OCI-LY7 (cell line): ENCODE measurements at regions of chr13 and their contacts with region 1.

Region 1: DNA sequence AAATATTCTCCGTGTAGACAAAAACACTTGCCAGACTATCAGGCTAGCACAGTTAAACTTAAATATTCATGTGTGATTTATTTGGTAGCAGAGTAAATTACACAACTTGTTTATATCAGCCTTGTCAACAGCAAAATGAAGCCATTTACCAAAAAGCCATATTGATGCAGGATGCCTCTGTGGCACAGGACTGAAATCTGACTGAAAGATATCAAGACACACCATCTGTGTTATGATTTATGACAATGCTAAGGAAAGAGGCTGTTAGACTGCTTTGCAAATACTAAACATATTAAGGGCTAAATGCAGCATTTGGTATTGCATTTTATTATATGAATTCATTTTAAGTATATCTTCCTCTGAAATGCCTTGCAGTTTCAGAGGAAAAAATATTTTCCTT is 44.8 kb upstream of the FNDC3A start:
- DNase-seq: no peak
- H3K4me3 ChIP-seq: no peak overlapping the region
- H3K27ac ChIP-seq: no peak overlapping the region
- H3K4me1 ChIP-seq: no peaks in the 10 kb centered on the region
- CTCF ChIP-seq: no peak

Region 2: DNA sequence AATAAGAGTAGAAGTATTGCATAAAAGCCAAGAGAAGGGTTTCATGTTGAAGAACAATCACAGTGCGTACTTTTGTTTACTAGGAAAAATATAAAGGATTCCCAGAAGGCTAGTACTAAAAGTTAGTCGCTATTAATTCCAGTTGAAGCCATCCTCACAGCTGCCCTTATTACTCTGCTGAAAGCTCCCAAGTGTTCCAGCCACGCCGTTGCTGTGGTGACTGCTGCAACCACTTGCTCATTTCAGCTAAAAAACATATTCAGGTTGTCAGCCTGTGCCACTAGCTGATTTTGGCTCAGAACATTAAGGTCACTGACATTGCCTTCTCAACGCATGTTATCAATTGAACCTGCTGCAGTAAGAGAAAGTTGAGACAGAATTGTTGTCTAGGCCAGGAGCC is 42.3 kb before region 1 on chr13:
- CTCF ChIA-PET with region 1: no interaction called
- POLR2A ChIA-PET with region 1: no interaction called
- intact Hi-C with region 1: loop called (anchors 1 kb)
- DNase-seq: no peak
- H3K4me3 ChIP-seq: no peak overlapping the region
- H3K27ac ChIP-seq: no peak overlapping the region
- H3K4me1 ChIP-seq: no peaks in the 10 kb centered on the region
- CTCF ChIP-seq: no peak